ENCODE measurements at regions of chr4 and their contacts with region 1.

Region 1: GRCh38 chr4:109998867-109999584 is 86.3 kb downstream of the EGF start:
- DNase-seq: peak; percentile 75
- H3K4me3 Mint-ChIP-seq: no peak overlapping the region
- H3K27ac Mint-ChIP-seq: no peak overlapping the region
- H3K4me1 Mint-ChIP-seq: no peaks in the 10 kb centered on the region
- H3K27me3 Mint-ChIP-seq: no peaks in the 10 kb centered on the region
- CTCF ChIP-seq: peak; percentile 74

Region 2: DNA sequence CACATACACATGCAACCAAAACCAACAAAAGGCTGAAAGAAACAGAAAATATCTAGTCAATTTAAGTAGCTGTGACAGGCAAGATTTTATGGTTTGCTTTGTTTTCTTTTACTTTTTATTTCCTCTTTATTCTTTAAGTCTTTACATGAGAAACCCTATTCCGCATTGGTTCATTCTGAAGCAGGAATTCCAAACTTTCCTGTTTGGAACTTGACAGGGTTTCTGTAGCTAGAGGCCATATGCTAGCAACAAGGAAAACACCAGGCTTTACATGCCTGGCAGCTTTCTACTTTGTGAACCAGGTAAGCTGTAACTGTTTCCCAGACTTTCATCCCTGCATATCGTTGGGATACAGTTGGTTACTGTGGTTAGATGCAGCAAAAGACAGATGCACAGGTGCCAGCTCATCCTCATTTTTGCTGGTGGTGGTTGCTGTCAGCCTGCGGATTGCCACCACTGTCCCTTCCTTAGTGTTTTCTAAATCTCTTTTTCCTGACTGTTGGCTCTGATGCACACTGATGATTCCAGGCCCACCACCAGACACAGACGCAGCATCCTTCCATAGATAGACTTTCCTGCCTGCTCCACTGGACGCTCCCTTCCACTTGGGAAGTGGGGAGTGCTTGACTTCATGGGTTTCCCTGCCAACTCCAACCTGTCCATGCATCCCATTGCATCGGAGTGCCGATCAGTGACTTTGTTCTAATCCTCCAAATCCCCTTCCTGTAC is 15.0 kb after region 1 on chr4:
- CTCF ChIA-PET with region 1: interaction called, 31 read pairs
- POLR2A ChIA-PET with region 1: no interaction called
- intact Hi-C with region 1: no loop called
- DNase-seq: no peak
- H3K4me3 Mint-ChIP-seq: no peak overlapping the region
- H3K27ac Mint-ChIP-seq: no peak overlapping the region
- H3K4me1 Mint-ChIP-seq: no peaks in the 10 kb centered on the region
- H3K27me3 Mint-ChIP-seq: no peaks in the 10 kb centered on the region
- CTCF ChIP-seq: no peak

Region 3: DNA sequence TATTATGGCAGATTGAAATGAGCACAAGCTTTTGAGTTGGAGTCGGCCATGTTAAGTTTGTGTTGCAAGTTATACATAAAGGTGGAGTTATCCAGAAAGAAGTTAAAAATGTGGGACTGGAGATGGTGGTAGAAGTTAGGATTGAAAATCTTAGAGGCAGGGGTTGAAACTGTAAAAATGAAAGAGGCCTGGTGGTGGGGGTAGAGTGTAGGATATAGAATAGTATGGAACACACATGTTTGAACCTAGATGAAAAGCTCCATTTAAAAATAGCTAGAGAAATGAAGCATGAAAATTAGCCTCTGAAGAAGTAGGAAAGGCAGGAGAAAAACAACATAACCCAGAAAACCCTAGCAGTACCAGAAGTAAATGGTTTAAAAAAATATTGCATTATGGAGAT is 345.1 kb after region 1 on chr4:
- CTCF ChIA-PET with region 1: interaction called, 12 read pairs
- POLR2A ChIA-PET with region 1: no interaction called
- intact Hi-C with region 1: no loop called
- DNase-seq: peak; percentile 22
- H3K4me3 Mint-ChIP-seq: no peak overlapping the region
- H3K27ac Mint-ChIP-seq: no peak overlapping the region
- H3K4me1 Mint-ChIP-seq: no peaks in the 10 kb centered on the region
- H3K27me3 Mint-ChIP-seq: peaks cover 5% of the 10 kb centered on the region
- CTCF ChIP-seq: peak; percentile 18

Region 4: DNA sequence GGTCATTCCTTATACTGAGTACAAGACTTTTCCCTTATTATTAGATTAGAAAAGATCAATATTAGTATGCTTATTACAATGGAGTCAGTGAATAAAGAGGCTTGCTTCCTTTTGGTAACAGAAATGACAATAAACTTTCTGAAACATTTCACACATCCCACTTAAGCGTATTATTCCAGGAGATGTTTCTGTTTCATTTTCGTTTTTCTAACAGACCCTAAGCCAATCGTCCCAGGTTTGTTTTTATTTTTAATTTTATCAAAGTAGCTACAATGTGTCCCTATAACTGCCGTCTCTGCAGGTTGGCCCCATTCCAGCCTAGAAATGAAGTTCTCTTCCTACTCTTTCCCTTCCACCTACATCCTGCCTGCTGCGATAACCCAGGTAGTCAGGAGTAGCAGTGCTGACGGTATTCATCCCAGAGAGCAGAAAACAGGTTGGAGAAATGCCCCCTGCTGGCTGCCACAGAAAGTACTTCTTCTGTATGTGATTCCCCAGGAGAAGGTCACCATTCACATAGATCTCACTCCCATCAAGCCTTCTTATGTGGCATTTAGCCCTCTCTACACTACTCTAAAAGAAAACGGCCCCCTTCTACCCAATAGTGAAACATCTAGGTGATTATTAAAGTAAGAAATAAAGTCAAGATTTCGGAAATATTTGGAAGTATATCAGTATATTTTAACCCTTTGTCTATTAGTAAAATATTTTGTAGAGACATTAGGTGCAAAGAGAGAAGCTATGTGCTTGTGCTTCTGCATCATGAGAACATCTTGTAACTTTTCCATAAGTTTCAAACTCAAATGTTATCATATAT is 517.3 kb after region 1 on chr4:
- CTCF ChIA-PET with region 1: interaction called, 744 read pairs
- POLR2A ChIA-PET with region 1: no interaction called
- intact Hi-C with region 1: loop called (anchors 1 kb)
- DNase-seq: peak; percentile 88
- H3K4me3 Mint-ChIP-seq: peak overlapping the region; percentile 80
- H3K27ac Mint-ChIP-seq: peak overlapping the region; percentile 75
- H3K4me1 Mint-ChIP-seq: no peaks in the 10 kb centered on the region
- H3K27me3 Mint-ChIP-seq: no peaks in the 10 kb centered on the region
- CTCF ChIP-seq: peak; percentile 56

Region 5: GRCh38 chr4:111136438-111136837 is 1137.4 kb after region 1 on chr4:
- CTCF ChIA-PET with region 1: interaction called, 3 read pairs
- POLR2A ChIA-PET with region 1: no interaction called
- intact Hi-C with region 1: loop called (anchors 10 kb)
- DNase-seq: peak; percentile 37
- H3K4me3 Mint-ChIP-seq: no peak overlapping the region
- H3K27ac Mint-ChIP-seq: no peak overlapping the region
- H3K4me1 Mint-ChIP-seq: no peaks in the 10 kb centered on the region
- H3K27me3 Mint-ChIP-seq: no peaks in the 10 kb centered on the region
- CTCF ChIP-seq: peak; percentile 34